Esophagus muscularis mucosa (tissue), 4 donors: ENCODE measurements at regions of chr9 and their contacts with region 1.

Region 1: GRCh38 chr9:105244003-105244733 is at the start of gene SLC44A1:
- DNase-seq: peak; percentile 98
- H3K4me3 ChIP-seq: peak within 1 kb of the TSS; percentile 82 to 94 (median 86)
- H3K27ac ChIP-seq: peak within 1 kb of the TSS; percentile 81 to 84 (median 82)
- H3K4me1 ChIP-seq: peaks cover 9 to 55% (median 49%) of the 10 kb centered on the region in 4 donors
- H3K27me3 ChIP-seq: no peaks in the 10 kb centered on the region
- CTCF ChIP-seq: peak in 1 of 3 experiments; percentile 12
- EP300 ChIP-seq: no peak
- POLR2A ChIP-seq: no peak
- total RNA-seq, gene SLC44A1: 25.7 to 37.8 (median 28.3) TPM

Region 2: GRCh38 chr9:104968025-104968982 is 275.9 kb before region 1 on chr9:
- intact Hi-C with region 1: loop called (anchors 10 kb)
- DNase-seq: peak; percentile 98
- H3K4me3 ChIP-seq: peak overlapping the region; percentile 67 to 92 (median 76)
- H3K27ac ChIP-seq: peak overlapping the region; percentile 93 to 98 (median 94)
- H3K4me1 ChIP-seq: peaks cover 20 to 40% (median 37%) of the 10 kb centered on the region in 4 donors
- H3K27me3 ChIP-seq: no peaks in the 10 kb centered on the region
- CTCF ChIP-seq: peak in 1 of 3 experiments; percentile 10
- EP300 ChIP-seq: peak; percentile 56
- POLR2A ChIP-seq: no peak

Region 3: DNA sequence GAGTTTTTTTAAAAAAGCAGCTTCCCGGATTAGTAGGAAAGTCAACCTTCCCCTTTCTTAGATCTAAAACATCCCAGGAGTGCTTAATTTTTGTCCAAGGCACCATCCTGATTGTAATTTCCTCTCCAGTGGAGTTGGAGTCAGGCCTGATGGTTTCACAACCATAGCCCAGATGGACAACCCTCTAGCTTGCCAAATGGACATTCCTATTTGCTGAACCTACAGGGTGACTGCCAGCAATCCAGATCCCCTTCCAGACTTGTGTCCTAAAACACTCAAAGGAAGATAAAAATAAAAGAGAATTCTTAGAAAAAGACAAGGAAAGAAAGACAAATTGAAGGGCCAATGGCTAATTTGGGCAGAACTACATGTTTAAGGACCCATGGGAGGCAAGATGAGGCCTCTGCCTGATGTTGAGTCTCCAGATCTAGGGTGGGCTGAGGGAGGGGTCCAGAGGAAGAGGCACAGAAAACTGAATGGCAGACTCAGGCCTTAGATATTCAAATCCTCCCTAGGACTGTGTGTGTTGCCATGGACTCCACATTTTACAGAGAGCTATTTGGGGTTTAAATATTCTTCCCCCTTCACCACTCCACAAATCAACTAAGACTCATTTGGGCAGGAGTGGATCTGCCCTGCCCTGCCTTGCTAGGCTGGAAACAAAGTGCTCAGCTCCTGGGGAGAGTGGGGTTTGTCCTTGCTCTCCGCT is 38.2 kb before region 1 on chr9:
- intact Hi-C with region 1: loop called (anchors 5 kb)
- DNase-seq: no peak
- H3K4me3 ChIP-seq: no peak overlapping the region
- H3K27ac ChIP-seq: peak overlapping the region; percentile 64 to 78 (median 72)
- H3K4me1 ChIP-seq: peaks cover 14 to 23% (median 22%) of the 10 kb centered on the region in 4 donors
- H3K27me3 ChIP-seq: no peaks in the 10 kb centered on the region
- CTCF ChIP-seq: no peak
- EP300 ChIP-seq: no peak
- POLR2A ChIP-seq: no peak

Region 4: DNA sequence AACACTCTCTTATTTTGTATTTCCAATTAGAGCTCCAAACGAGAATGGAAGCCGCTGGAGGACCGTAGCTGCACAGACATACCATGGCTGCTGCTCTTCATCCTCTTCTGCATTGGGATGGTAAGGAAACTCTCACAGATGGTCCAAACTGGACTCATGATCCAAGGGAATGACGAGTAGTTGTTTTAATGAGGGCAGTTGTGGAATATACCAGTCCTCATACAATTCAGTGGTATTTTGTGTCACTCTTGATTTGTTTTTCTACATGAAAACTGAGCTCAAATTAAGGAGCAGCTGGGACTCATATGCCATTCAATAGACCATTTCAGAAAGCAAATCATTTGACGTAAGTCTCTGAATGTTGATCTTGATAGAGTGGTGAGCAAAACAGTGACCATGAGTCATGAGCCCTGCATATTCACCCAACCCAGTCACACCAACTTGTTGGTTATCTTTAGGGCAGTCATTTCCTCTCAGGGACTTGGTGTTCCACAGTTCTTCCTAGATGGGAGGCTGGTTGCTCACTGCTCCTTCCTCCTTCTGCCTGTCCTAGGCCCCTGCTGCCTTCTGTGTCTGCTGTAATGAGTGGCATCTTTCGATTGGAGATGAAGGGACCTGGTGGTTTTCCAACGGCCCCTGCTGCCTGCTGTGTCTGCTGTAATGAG is 55.2 kb after region 1 on chr9:
- intact Hi-C with region 1: loop called (anchors 2 kb)
- DNase-seq: no peak
- H3K4me3 ChIP-seq: no peak overlapping the region
- H3K27ac ChIP-seq: no peak overlapping the region
- H3K4me1 ChIP-seq: peaks cover 13 to 17% (median 13%) of the 10 kb centered on the region in 4 donors
- H3K27me3 ChIP-seq: no peaks in the 10 kb centered on the region
- CTCF ChIP-seq: no peak
- EP300 ChIP-seq: no peak
- POLR2A ChIP-seq: no peak

Region 5: GRCh38 chr9:105447814-105448812 is 203.9 kb after region 1 on chr9 and contains the start of gene FSD1L:
- intact Hi-C with region 1: no loop called
- DNase-seq: peak; percentile 95
- H3K4me3 ChIP-seq: peak within 1 kb of the TSS; percentile 88 to 99 (median 94)
- H3K27ac ChIP-seq: peak within 1 kb of the TSS; percentile 79 to 85 (median 82)
- H3K4me1 ChIP-seq: peaks cover 10 to 36% (median 26%) of the 10 kb centered on the region in 4 donors
- H3K27me3 ChIP-seq: no peaks in the 10 kb centered on the region
- CTCF ChIP-seq: peak; percentile 22 to 44 (median 22)
- EP300 ChIP-seq: no peak
- POLR2A ChIP-seq: peak; percentile 53
- total RNA-seq, gene FSD1L: 2.2 to 5.4 (median 2.6) TPM

Region 6: DNA sequence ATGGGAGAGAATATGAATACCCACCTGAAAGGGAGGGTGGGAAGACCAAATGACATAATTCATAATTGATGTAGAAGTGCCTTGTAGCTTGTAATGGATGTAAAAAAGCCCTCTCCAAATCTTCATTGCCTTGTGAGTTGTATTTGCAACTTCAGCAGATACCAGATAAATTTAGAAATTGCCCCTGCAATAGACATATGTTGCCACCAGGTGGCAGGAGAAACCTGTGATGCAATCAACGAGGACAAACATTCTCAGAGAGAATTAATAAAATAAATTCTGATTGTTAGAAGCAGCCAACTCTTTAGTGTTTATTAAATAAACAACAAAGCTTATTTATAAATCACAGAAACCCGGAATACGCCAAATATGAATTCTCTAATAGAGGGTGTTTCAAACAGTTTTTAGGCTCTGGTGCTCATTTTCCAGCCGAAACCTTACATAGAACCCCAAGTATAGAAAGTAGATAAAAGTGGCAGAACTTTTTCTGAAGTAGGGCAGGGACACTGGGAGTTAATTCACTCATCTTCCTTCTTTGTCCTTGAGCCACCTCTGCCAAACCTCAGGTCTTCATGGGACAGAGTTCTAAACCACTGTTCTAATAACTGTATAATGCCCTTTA is 598.0 kb after region 1 on chr9:
- intact Hi-C with region 1: no loop called
- DNase-seq: peak; percentile 53
- H3K4me3 ChIP-seq: no peak overlapping the region
- H3K27ac ChIP-seq: no peak overlapping the region
- H3K4me1 ChIP-seq: no peaks in the 10 kb centered on the region
- H3K27me3 ChIP-seq: no peaks in the 10 kb centered on the region
- CTCF ChIP-seq: peak; percentile 43 to 64 (median 48)
- EP300 ChIP-seq: no peak
- POLR2A ChIP-seq: no peak